ENCODE measurements at regions of chr7 and their contacts with region 1.

Region 1: GRCh38 chr7:11373546-11374142 is 400.0 kb downstream of the PHF14 start:
- DNase-seq: peak; percentile 14
- H3K4me3 ChIP-seq: no peak overlapping the region
- H3K27ac ChIP-seq: peak overlapping the region in 1 of 2 experiments; percentile 47; a peak in 2 of 4 replicates
- H3K4me1 ChIP-seq: no peaks in the 10 kb centered on the region; a peak in 1 of 4 replicates
- H3K27me3 ChIP-seq: no peaks in the 10 kb centered on the region
- CTCF ChIP-seq: peak; percentile 70
- EP300 ChIP-seq: no peak
- RAD21 ChIP-seq: peak; percentile 77

Region 2: GRCh38 chr7:11394438-11394837 is 20.8 kb after region 1 on chr7:
- CTCF ChIA-PET with region 1: interaction called, 10 read pairs
- POLR2A ChIA-PET with region 1: no interaction called
- DNase-seq: no peak
- H3K4me3 ChIP-seq: no peak overlapping the region
- H3K27ac ChIP-seq: no peak overlapping the region
- H3K4me1 ChIP-seq: no peaks in the 10 kb centered on the region
- H3K27me3 ChIP-seq: no peaks in the 10 kb centered on the region
- CTCF ChIP-seq: no peak
- EP300 ChIP-seq: no peak
- RAD21 ChIP-seq: no peak

Measured in SK-N-SH (cell line).